Pancreas (tissue), 10 donors: ENCODE measurements at regions of chrX and their contacts with region 1.

Region 1: DNA sequence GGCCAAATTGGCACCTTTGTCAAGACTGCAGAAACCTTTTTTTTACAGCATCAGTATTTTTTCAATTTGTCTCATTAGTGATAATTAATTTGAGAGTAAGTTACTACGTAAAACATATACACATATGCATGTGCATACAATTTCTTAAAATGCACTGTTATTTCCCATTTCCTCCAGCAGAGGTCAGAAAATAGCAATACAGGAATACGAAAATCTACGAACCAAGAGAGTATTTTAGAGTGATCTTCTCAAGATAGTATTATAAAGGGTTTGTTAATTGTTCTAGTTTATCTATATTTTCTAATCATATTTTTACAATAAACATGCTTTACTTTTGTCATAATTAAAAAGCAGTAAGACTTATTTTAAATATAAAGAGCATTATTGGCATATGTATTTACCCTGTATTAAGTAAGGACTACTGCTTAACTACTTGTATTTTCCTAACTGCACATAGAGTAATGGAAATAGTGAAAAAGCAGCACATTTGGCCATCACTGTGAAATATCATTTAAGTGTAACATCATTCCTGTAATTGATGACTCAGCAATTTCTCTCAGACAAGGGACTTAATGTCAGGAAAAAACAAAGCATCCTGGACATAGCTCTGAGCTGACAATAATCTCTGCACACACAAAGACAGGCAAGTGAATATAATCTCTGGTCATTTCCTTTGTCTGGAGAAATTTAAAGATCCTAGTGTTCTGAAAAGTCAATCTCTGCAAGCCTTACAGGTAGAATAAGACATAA is 45.6 kb downstream of the MAOB start:
- DNase-seq: no peak
- ATAC-seq: peak in 3 of 4 donors; percentile 53 to 62 (median 54)
- H3K4me3 ChIP-seq: no peak overlapping the region
- H3K27ac ChIP-seq: no peak overlapping the region
- H3K4me1 ChIP-seq: no peaks in the 10 kb centered on the region
- H3K27me3 ChIP-seq: peaks cover 4 to 12% (median 4%) of the 10 kb centered on the region in 4 donors
- CTCF ChIP-seq: peak; percentile 22 to 56 (median 52)

Region 2: GRCh38 chrX:43773298-43773697 is 63.3 kb before region 1 on chrX:
- intact Hi-C with region 1: loop called in 1 of 3 experiments (anchors 10 kb)
- DNase-seq: no peak
- ATAC-seq: no peak
- H3K4me3 ChIP-seq: no peak overlapping the region
- H3K27ac ChIP-seq: no peak overlapping the region
- H3K4me1 ChIP-seq: no peaks in the 10 kb centered on the region
- H3K27me3 ChIP-seq: peaks cover 0 to 14% (median 0%) of the 10 kb centered on the region in 4 donors
- CTCF ChIP-seq: no peak

Region 3: DNA sequence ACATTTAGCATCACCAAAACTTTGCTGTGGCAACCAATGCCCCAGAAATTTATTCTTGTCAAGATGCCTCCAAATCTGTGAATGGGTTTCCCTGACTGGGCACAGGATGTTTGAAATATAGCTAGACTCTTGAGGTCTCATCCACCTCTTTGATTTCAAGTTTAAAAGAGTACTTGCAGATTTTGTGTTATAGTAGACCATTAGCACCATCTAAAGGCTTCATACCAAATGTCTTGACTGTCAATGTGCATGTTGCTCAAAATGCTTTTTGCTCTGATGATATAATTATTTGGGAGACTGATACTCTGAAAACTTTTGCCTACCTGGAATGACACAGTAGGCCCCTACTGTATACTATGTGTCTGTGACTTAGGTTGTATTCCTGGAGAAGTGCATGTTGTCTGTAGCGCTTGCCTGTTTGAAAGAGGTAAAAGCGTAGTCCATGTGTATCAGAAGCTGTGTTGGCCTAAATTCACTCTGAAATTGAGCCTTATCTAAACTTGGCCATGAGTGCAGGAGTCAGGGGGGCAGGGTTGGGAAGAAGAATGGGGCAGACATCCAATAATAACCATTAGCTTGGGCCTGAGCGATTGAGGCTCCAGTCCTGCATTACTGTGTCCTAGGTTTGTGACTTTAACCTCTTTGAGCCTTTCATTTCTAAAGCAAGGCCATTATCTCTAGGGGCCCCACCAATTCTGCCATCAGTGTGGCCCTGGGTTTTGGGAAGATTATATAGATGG is 102.7 kb after region 1 on chrX:
- intact Hi-C with region 1: loop called in 1 of 3 experiments (anchors 10 kb)
- DNase-seq: no peak
- ATAC-seq: peak in 1 of 4 donors; percentile 32
- H3K4me3 ChIP-seq: no peak overlapping the region
- H3K27ac ChIP-seq: no peak overlapping the region
- H3K4me1 ChIP-seq: no peaks in the 10 kb centered on the region
- H3K27me3 ChIP-seq: peaks cover 0 to 20% (median 0%) of the 10 kb centered on the region in 4 donors
- CTCF ChIP-seq: no peak